ENCODE measurements at regions of chr20 and their contacts with region 1.

Region 1: GRCh38 chr20:35269055-35269781 is 8.7 kb downstream of the MMP24OS start:
- DNase-seq: peak; percentile 90
- H3K4me3 Mint-ChIP-seq: no peak overlapping the region
- H3K27ac Mint-ChIP-seq: peak overlapping the region; percentile 19
- H3K4me1 Mint-ChIP-seq: peaks cover 25% of the 10 kb centered on the region
- H3K27me3 Mint-ChIP-seq: no peaks in the 10 kb centered on the region
- CTCF ChIP-seq: peak; percentile 90

Region 2: GRCh38 chr20:35196313-35196712 is 72.9 kb before region 1 on chr20:
- CTCF ChIA-PET with region 1: no interaction called
- intact Hi-C with region 1: no loop called
- DNase-seq: no peak
- H3K4me3 Mint-ChIP-seq: no peak overlapping the region
- H3K27ac Mint-ChIP-seq: no peak overlapping the region
- H3K4me1 Mint-ChIP-seq: peaks cover 36% of the 10 kb centered on the region
- H3K27me3 Mint-ChIP-seq: no peaks in the 10 kb centered on the region
- CTCF ChIP-seq: no peak

Region 3: GRCh38 chr20:35207950-35208611 is 61.1 kb before region 1 on chr20:
- CTCF ChIA-PET with region 1: interaction called, 3 read pairs
- intact Hi-C with region 1: loop called (anchors 2 kb)
- DNase-seq: peak; percentile 93
- H3K4me3 Mint-ChIP-seq: no peak overlapping the region
- H3K27ac Mint-ChIP-seq: no peak overlapping the region
- H3K4me1 Mint-ChIP-seq: peaks cover 8% of the 10 kb centered on the region
- H3K27me3 Mint-ChIP-seq: no peaks in the 10 kb centered on the region
- CTCF ChIP-seq: peak; percentile 77

Region 4: DNA sequence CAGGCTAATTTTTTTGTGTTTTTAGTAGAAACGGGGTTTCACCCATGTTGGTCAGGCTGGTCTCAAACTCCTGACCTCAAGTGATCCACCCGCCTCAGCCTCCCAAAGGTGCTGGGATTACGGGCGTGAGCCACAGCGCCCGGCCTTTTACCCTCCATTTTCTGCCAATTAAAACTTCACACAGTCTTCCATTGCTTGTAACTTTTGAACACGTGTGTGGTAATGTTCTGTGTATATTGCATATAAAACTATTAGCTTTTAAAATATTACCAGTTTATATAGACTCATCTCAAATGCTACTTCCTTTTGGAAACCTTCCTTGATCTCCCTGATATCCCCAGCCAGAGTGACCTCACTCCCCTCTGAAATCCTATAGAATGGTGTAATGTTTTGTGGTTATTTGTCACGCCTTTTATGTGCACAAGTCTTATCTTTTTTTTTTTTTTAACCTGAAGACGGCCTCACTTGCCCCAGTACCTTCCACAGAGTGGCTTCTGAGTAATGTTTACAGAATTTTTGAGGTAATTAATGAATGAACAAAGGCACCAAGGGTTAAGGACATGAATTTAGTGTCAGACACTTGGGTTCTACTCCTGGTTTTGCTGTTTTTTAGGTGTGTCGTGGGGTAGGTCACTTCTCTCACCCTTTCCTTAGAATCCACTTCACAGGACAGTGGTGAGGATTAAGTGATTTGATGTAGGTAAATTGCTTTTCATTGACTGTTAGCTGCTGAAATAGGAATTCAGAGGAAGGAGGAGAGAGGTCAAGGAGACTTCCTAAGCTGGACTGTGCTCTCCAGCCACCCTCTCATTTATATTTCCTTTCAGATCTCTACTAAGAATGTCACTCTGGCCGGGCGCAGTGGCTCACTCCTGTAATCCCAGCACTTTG is 53.9 kb before region 1 on chr20:
- CTCF ChIA-PET with region 1: interaction called, 12 read pairs
- intact Hi-C with region 1: no loop called
- DNase-seq: peak; percentile 62
- H3K4me3 Mint-ChIP-seq: no peak overlapping the region
- H3K27ac Mint-ChIP-seq: peak overlapping the region; percentile 84
- H3K4me1 Mint-ChIP-seq: peaks cover 31% of the 10 kb centered on the region
- H3K27me3 Mint-ChIP-seq: no peaks in the 10 kb centered on the region
- CTCF ChIP-seq: no peak

Measured in Calu3 (cell line).